HCT116 (cell line): ENCODE measurements at regions of chr4 and their contacts with region 1.

Region 1: GRCh38 chr4:130808492-130808891 is 1712.5 kb downstream of the C4orf33 start:
- DNase-seq: peak; percentile 35
- ATAC-seq: peak; percentile 78
- H3K4me3 ChIP-seq: no peak overlapping the region
- H3K27ac ChIP-seq: no peak overlapping the region
- H3K4me1 ChIP-seq: no peaks in the 10 kb centered on the region
- H3K27me3 ChIP-seq: no peaks in the 10 kb centered on the region
- CTCF ChIP-seq: peak; percentile 45 to 76 (median 63); a peak in 5 of 6 replicates
- POLR2A ChIP-seq: no peak
- RAD21 ChIP-seq: peak; percentile 55

Region 2: GRCh38 chr4:130359542-130359941 is 448.9 kb before region 1 on chr4:
- CTCF ChIA-PET with region 1: interaction called, 3 read pairs
- POLR2A ChIA-PET with region 1: no interaction called
- RAD21 ChIA-PET with region 1: no interaction called
- intact Hi-C with region 1: loop called (anchors 2 kb)
- DNase-seq: peak; percentile 6
- ATAC-seq: no peak
- H3K4me3 ChIP-seq: no peak overlapping the region
- H3K27ac ChIP-seq: no peak overlapping the region
- H3K4me1 ChIP-seq: no peaks in the 10 kb centered on the region
- H3K27me3 ChIP-seq: no peaks in the 10 kb centered on the region
- CTCF ChIP-seq: peak; percentile 24 to 51 (median 28); a peak in 4 of 6 replicates
- POLR2A ChIP-seq: no peak
- RAD21 ChIP-seq: peak; percentile 70

Region 3: GRCh38 chr4:130563185-130563888 is 245.2 kb before region 1 on chr4:
- CTCF ChIA-PET with region 1: interaction called, 3 read pairs
- POLR2A ChIA-PET with region 1: no interaction called
- RAD21 ChIA-PET with region 1: interaction called in 1 of 2 experiments, 5 read pairs
- intact Hi-C with region 1: loop called (anchors 2 kb)
- DNase-seq: peak; percentile 66
- ATAC-seq: peak; percentile 96
- H3K4me3 ChIP-seq: peak overlapping the region; percentile 36 to 58
- H3K27ac ChIP-seq: no peak overlapping the region
- H3K4me1 ChIP-seq: peaks cover 0 to 13% of the 10 kb centered on the region in 2 experiments; a peak in 2 of 4 replicates
- H3K27me3 ChIP-seq: no peaks in the 10 kb centered on the region
- CTCF ChIP-seq: peak; percentile 34 to 81 (median 76); a peak in 5 of 6 replicates
- POLR2A ChIP-seq: no peak
- RAD21 ChIP-seq: peak; percentile 86

Region 4: GRCh38 chr4:130753926-130754325 is 54.6 kb before region 1 on chr4:
- CTCF ChIA-PET with region 1: no interaction called
- POLR2A ChIA-PET with region 1: no interaction called
- RAD21 ChIA-PET with region 1: no interaction called
- intact Hi-C with region 1: no loop called
- DNase-seq: no peak
- ATAC-seq: no peak
- H3K4me3 ChIP-seq: no peak overlapping the region
- H3K27ac ChIP-seq: no peak overlapping the region
- H3K4me1 ChIP-seq: no peaks in the 10 kb centered on the region
- H3K27me3 ChIP-seq: no peaks in the 10 kb centered on the region
- CTCF ChIP-seq: no peak
- POLR2A ChIP-seq: no peak
- RAD21 ChIP-seq: no peak

Region 5: GRCh38 chr4:131137196-131137595 is 328.7 kb after region 1 on chr4:
- CTCF ChIA-PET with region 1: no interaction called
- POLR2A ChIA-PET with region 1: no interaction called
- RAD21 ChIA-PET with region 1: no interaction called
- intact Hi-C with region 1: no loop called
- DNase-seq: no peak
- ATAC-seq: no peak
- H3K4me3 ChIP-seq: no peak overlapping the region
- H3K27ac ChIP-seq: no peak overlapping the region
- H3K4me1 ChIP-seq: no peaks in the 10 kb centered on the region
- H3K27me3 ChIP-seq: no peaks in the 10 kb centered on the region
- CTCF ChIP-seq: no peak
- POLR2A ChIP-seq: no peak
- RAD21 ChIP-seq: no peak